ENCODE measurements at regions of chrX and their contacts with region 1.

Region 1: GRCh38 chrX:8845060-8845459 is 43.9 kb upstream of the FAM9A start:
- DNase-seq: peak; percentile 51
- H3K4me3 ChIP-seq: no peak overlapping the region
- CTCF ChIP-seq: peak; percentile 43

Region 2: DNA sequence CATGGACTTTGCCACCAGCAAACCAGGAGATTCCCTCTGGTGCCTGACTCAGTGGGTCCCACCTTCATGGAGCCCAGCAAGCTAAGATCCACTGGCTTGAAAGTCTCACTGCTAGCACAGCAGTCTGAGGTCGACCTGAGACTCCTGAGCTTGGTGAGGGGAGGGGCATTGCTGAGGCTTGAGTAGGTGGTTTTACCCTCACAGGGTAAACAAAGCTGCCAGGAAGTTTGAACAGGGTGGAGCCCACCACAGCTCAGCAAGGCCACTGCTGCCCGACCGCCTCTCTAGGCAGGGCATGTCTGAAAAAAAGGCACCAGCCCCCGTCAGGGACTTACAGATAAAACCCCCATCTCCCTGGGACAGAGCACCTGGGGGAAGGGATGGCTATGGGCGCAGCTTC is 71.9 kb before region 1 on chrX:
- in situ Hi-C with region 1: no loop called
- DNase-seq: no peak
- H3K4me3 ChIP-seq: no peak overlapping the region
- CTCF ChIP-seq: no peak

Region 3: DNA sequence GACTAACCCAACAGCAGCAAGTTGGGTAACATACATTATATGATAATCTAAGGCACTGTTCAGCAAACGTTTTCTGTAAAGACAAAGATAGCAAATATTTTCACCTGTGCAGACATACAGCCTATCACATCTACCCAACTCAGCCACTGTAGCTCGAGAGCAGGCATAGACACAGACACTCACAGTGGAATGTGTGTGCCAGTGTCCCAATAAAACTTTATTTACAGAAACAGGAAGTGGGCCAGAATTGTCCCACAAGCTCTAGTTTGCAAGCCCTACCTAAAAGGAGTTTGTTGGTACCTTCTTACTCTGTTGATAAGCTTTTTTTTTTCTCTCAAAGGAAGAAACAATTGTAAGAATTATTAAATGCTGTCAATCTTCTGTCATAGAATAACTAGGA is 32.0 kb before region 1 on chrX:
- in situ Hi-C with region 1: loop called (anchors 5 kb)
- DNase-seq: no peak
- H3K4me3 ChIP-seq: no peak overlapping the region
- CTCF ChIP-seq: no peak

Measured in astrocyte of the cerebellum (primary cell).